Heart right ventricle (tissue), 16 donors: ENCODE measurements at regions of chr9 and their contacts with region 1.

Region 1: DNA sequence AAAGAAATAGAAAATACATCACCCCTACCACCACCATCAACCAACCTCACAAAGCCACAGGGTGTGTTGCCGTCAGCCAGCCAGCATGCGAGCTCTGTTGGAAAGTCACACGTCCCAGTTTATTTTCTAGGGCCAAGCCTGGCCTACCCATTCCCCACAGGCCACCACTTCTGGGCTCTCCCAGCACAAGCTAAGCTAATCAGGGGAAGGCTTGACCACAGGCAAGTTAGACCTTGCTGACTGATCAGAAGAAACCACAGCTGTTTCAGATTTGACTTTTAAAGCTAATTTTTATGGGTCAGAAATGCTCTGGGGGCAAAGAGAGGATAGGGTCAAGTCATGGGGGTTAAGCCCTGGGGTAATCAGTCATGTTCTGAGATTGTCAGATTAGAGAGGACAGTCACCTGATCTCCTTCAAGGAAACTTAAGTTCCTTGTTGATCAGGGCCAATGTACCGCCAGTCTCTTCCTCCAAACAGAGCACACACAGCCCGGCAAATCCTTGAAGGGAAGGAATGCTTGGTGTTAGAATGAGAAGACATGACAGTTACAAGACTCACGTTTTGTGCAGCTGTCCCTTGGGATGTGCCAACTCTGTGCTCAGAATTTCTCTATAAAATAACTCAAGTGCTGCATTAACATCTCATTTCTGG is 7.6 kb downstream of the SHB start:
- DNase-seq: no peak
- ATAC-seq: no peak
- H3K4me3 ChIP-seq: no peak overlapping the region
- H3K27ac ChIP-seq: peak overlapping the region in 9 of 10 donors; percentile 31 to 98 (median 68)
- H3K4me1 ChIP-seq: peaks cover 22 to 100% (median 87%) of the 10 kb centered on the region in 9 donors
- H3K27me3 ChIP-seq: no peaks in the 10 kb centered on the region
- CTCF ChIP-seq: no peak

Region 2: DNA sequence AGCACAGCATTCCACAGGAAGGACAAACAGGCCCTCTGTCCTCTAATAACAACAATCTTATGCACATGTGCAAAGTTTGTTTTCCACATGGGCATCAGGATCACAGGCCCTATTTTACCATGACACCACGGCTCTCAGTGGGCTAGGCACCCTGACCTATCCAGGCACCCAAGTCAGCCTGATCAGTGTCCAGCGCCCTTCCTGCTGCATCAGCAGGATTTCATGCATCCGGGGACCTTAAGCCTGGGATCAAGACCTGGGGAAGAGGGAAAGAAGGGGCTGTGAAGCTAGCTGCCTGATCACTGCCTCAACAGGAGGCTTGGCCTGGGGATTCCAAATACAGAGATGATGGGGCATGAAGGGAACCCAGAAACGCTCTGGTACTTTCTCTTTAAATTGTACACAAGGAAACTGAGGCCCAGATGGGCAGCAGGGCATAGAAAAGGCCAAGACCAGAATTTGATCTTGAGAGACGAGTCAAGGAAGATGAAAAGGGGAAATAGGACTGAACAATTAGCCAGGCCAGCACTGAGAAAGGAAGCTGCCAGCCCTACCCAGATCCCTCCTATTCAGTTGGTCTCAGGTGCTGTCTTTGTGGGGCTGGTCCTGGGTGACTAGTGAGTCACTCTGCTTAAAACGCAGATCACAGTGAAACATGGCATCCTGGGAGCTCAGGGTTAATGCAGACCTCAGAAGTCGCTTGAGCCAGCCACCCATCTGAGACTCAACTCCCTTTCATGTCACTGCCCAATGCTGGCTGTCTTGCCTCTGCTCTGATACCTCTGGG is 50.3 kb before region 1 on chr9:
- intact Hi-C with region 1: loop called in 7 of 10 experiments (anchors 5 to 10 kb)
- DNase-seq: no peak
- ATAC-seq: no peak
- H3K4me3 ChIP-seq: no peak overlapping the region
- H3K27ac ChIP-seq: no peak overlapping the region
- H3K4me1 ChIP-seq: peaks cover 19 to 56% (median 39%) of the 10 kb centered on the region in 9 donors
- H3K27me3 ChIP-seq: no peaks in the 10 kb centered on the region
- CTCF ChIP-seq: no peak

Region 3: GRCh38 chr9:38026021-38026809 is 35.2 kb before region 1 on chr9:
- intact Hi-C with region 1: loop called in 2 of 10 experiments (anchors 5 kb)
- DNase-seq: peak; percentile 35 to 59
- ATAC-seq: peak; percentile 65 to 82 (median 73)
- H3K4me3 ChIP-seq: peak overlapping the region in 1 of 10 donors; percentile 2
- H3K27ac ChIP-seq: peak overlapping the region; percentile 64 to 89 (median 78)
- H3K4me1 ChIP-seq: peaks cover 39 to 80% (median 53%) of the 10 kb centered on the region in 9 donors
- H3K27me3 ChIP-seq: no peaks in the 10 kb centered on the region
- CTCF ChIP-seq: no peak

Region 4: DNA sequence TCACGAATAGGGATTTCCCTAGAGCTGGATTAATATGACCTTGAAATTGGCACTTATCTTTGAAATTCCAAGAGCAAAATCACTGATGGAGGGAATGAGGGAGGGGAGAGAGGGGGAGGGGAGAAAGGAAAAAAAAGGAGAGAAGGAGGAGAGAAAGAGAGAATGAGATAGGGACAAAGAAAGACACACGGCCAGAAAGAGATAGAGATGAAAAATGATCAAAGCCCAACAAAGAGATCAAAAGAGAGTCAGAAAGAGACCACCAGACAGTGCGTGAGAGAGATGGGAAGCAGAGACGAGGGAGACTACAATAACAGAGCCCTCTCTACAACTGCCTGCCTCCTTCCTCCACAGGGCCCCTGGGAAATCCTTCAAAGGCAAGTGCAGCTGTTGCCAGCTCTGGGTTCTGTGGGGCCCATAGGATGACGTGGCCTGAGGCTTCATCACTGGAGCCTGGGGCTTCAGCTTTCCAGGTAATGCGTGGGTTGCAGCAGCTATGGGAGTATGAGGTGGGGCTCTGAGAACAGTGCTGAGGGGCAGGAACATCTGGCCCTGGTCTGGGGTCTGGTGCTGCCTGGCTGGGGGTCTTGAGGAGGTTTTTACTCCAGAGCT is 65.9 kb after region 1 on chr9:
- intact Hi-C with region 1: no loop called
- DNase-seq: no peak
- ATAC-seq: no peak
- H3K4me3 ChIP-seq: no peak overlapping the region
- H3K27ac ChIP-seq: no peak overlapping the region
- H3K4me1 ChIP-seq: no peaks in the 10 kb centered on the region
- H3K27me3 ChIP-seq: peaks cover 0 to 5% (median 0%) of the 10 kb centered on the region in 7 donors
- CTCF ChIP-seq: no peak